G401 (cell line): ENCODE measurements at regions of chr15 and their contacts with region 1.

Region 1: GRCh38 chr15:78574944-78575343 is 9.6 kb downstream of the CHRNA5 start:
- DNase-seq: no peak

Region 2: DNA sequence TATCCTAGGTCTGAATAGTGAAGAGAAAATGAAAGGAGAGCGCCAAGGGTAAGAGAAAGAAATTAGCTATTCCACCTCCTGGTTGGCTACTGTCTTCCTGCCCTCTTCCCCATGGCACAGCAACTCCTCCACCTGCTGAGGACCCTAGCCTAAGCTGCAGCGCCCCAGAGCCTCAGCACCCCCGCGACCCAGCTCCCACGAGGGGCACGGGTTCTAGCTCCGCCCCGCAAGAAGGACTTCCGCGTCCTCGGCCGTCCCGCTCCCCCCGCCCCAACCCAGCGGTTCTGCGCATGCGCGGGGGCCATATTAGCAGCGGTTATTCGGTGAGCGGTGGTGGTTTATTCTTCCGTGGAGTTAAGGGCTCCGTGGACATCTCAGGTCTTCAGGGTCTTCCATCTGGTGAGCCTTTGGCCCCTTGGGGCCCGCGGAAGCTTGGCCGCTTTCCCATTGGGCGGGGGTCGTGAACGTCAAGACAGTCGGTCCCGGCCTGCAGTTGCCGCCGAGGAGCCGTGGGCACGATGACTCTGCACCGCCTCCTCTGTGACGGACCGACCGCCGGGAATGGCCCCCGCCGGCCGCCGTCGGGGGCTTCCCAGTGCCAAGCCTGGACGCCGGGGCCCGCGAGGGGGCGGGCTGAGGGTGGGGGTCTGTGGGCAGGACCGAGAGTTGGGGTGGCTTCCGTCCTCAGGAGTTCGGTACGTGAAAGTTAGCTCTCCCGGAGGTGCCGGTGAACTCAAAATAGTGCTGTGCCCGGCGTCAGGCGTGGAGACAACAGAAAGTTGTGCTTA is 34.6 kb before region 1 on chr15 and contains the start of gene PSMA4:
- in situ Hi-C with region 1: loop called (anchors 5 kb)
- DNase-seq: peak; percentile 85
- total RNA-seq, gene PSMA4: 481 and 600 TPM in 2 replicates